AG04449 (cell line): ENCODE measurements at regions of chr2 and their contacts with region 1.

Region 1: GRCh38 chr2:109736177-109736827 is 57.8 kb upstream of the RGPD5 start:
- DNase-seq: peak; percentile 12
- H3K4me3 ChIP-seq: no peak overlapping the region
- CTCF ChIP-seq: peak; percentile 59

Region 2: DNA sequence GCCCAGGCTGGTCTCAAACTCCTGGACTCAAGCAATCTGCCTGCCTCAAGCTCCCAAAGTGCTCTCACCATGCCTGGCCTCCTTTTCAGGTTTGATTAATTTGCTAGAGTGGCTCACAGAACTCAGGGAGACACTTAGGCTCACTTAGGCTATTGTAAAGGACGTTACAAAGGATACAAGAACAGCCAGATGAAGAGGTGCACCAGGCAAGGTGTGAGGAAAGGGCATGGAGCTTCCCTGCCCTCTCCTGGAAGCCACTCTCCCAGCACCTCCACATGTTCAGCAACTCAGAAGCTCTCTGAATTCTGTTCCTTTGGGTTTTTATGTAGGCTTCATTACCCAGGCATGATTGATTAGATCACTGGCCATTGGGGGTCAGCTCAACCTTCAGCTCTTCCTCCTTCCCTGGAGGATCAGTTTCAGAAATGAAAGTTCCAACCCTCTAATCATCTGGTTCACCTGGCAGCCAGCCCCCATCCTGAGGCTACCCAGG is 20.9 kb before region 1 on chr2:
- CTCF ChIA-PET with region 1: interaction called, 12 read pairs
- POLR2A ChIA-PET with region 1: no interaction called
- DNase-seq: no peak
- H3K4me3 ChIP-seq: no peak overlapping the region
- CTCF ChIP-seq: peak; percentile 36